A549 (cell line): ENCODE measurements at regions of chr14 and their contacts with region 1.

Region 1: DNA sequence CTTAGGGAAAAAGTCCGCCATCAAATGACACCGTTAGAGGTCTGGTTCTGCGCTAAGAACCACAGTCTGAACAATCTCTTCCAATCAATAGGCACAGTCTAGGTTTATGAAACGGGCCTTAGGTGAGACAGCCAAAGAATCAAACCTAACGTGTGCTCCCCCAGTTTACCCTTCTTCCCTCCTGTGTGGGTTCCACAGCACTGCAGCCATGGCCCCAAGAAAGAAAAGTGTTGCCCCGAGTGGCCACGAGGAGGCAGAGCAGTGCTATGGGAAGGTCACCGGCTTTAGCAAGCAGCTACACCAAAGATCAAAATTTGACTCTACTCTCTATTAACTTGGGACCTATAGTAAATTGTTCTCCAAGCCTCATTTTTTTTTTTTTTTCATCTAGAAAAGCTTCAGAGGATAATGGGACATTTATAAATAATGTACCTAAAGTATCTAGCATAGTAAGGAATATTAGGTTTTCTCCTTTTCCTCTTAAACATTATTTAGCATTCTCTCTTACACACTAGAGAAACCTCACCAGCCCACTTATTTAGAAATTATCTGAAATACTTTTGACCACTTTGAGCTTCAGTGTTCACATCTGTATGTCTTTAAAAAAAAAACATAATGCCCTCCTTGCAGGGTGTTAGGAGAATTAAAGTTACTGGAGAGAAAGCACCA is 70.2 kb upstream of the GPHB5 start:
- DNase-seq: peak; percentile 20 to 65
- ATAC-seq: peak; percentile 94 to 98
- H3K4me3 ChIP-seq: no peak overlapping the region
- H3K27ac ChIP-seq: no peak overlapping the region
- H3K4me1 ChIP-seq: no peaks in the 10 kb centered on the region
- CTCF ChIP-seq: peak; percentile 86
- EP300 ChIP-seq: no peak
- POLR2A ChIP-seq: no peak
- RAD21 ChIP-seq: peak; percentile 91 to 92

Region 2: DNA sequence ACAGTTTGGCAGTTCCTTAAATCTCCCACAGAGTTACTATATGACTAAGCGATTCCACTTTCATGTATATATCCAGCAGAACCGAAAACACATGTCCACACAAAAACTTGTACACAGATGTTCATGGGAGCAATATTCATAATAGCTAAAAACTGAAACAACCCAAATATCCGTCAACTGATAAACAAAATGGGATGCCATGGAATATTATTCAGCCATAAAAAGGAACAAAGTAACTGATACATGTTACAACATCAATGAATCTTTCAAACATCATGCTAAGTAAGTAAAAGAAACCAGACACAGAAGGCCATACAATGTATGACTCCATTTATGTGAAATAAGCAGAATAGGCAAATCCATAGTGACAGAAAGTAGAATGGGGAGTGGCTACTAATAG is 10.1 kb after region 1 on chr14:
- CTCF ChIA-PET with region 1: interaction called, 19 read pairs
- POLR2A ChIA-PET with region 1: no interaction called
- DNase-seq: no peak
- ATAC-seq: no peak
- H3K4me3 ChIP-seq: no peak overlapping the region
- H3K27ac ChIP-seq: no peak overlapping the region
- H3K4me1 ChIP-seq: peaks cover 11% of the 10 kb centered on the region; the same call in 1 of the 3 replicates
- CTCF ChIP-seq: no peak
- EP300 ChIP-seq: no peak
- POLR2A ChIP-seq: no peak
- RAD21 ChIP-seq: no peak

Region 3: DNA sequence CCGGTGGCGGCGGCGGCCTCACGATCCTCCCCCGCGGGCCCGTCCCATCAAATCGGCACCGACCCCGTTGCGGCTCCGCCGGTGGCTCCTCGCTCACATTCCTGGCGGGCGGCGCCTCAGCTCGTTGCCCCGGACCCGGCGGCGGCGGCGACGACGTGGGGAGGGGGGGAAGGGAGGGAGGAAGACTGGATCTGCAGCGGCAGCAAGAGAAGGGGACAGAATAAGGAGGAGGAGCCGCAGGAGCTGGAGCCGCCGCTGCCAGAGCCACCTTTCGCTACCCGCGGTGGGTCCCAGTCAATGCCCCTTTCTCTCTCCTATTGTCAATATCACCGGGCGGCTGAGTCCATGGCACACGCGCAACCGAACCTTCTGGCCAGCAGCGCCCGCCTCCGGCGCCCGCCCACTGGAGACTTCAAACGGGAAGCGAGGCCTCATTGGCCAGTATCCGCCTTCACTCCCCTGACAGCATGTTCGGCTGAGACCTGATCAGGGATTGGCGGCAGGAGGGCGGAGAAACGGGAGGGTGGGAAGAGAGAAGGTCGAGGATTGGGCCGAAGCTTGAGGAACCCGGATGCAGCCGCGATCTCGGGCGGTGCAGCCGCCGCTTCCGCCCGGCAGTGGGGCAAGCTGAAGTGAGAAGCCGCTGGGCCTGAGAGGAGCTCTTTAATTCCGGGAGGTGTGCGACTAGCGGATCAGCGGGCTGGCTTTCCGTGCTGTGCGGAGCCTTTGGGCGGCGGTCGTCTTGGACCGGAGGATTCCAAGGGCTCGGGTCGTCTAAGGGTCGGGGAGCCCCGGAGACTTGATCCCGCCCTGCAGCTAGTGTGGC is 154.3 kb after region 1 on chr14 and contains the start of gene PPP2R5E:
- CTCF ChIA-PET with region 1: interaction called, 38 read pairs
- POLR2A ChIA-PET with region 1: interaction called, 7 read pairs
- DNase-seq: peak; percentile 96 to 99
- ATAC-seq: peak; percentile 97 to 98
- H3K4me3 ChIP-seq: peak within 1 kb of the TSS; percentile 71
- H3K27ac ChIP-seq: peak within 1 kb of the TSS; percentile 92 to 97
- H3K4me1 ChIP-seq: peaks cover 10% of the 10 kb centered on the region; the same call in 2 of the 3 replicates
- CTCF ChIP-seq: no peak
- EP300 ChIP-seq: no peak
- POLR2A ChIP-seq: peak; percentile 86
- RAD21 ChIP-seq: no peak
- polyA plus RNA-seq, gene PPP2R5E: 23.2 and 25.0 TPM in 2 replicates

Region 4: DNA sequence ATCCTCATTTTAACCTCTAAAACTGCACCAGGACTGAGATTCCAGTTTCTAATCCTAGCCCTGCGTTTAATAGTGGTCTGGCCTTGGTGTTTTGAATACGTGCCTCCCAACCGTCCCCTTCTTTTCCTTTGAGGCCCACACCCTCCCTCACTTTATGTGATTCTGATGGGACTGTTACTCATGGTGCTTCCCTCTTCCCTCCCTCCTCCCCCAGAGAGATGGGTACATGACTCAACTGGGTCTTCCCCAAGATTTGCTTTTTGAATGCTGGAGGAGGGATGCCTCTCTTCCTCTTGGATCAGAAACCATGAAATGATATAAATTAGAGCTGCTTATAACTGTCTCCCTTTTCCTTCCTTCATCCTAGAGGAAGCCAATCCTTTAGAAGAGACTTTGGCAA is 162.4 kb after region 1 on chr14:
- CTCF ChIA-PET with region 1: interaction called, 15 read pairs
- POLR2A ChIA-PET with region 1: no interaction called
- DNase-seq: no peak
- ATAC-seq: peak; percentile 24 to 51; a peak in 1 of 6 replicates
- H3K4me3 ChIP-seq: no peak overlapping the region
- H3K27ac ChIP-seq: no peak overlapping the region
- H3K4me1 ChIP-seq: peaks cover 3% of the 10 kb centered on the region; the same call in 1 of the 3 replicates
- CTCF ChIP-seq: no peak
- EP300 ChIP-seq: no peak
- POLR2A ChIP-seq: no peak
- RAD21 ChIP-seq: no peak

Region 5: DNA sequence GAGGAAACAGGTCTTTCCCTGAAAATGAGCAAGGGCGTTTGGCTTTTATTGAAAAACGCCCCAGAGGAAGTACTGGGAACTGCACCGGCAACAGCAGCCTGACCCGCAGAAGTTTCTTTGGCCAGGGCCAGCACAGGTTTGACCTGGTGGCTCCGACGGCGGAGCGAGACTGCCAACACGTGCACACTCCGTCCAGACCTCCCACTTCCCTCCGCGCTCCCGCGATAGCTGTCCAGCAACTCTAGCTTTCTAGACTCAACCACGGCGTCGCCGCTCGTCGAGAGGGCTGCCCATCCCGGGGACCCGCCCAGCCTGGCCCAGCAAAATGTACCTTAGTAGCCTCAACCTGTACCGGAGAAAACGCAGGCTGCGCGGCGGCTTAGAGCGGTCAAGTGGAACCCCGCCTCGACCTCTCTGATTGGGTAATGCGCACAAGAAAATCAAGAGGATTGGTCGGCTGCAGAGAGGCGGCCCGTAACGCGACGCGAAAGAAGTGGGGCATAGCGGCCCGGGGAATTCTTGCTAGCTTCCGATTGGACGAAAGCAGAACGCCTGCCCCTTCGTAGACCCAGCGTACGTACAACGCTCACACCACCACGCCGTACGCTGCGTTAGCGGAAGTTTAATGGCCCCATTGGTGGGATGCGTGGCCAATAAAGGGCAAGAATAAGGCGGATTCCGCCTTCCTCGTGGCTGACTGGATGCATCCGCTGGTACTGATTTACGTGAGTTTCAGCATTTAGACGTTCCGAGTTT is 252.8 kb after region 1 on chr14 and contains the start of gene WDR89:
- CTCF ChIA-PET with region 1: interaction called, 18 read pairs
- POLR2A ChIA-PET with region 1: interaction called, 5 read pairs
- DNase-seq: peak; percentile 98 to 100
- ATAC-seq: peak; percentile 96
- H3K4me3 ChIP-seq: peak within 1 kb of the TSS; percentile 55
- H3K27ac ChIP-seq: peak within 1 kb of the TSS; percentile 85 to 90
- H3K4me1 ChIP-seq: peaks cover 15% of the 10 kb centered on the region; the same call in 2 of the 3 replicates
- CTCF ChIP-seq: peak; percentile 50; the same call in 2 of the 3 replicates
- EP300 ChIP-seq: no peak
- POLR2A ChIP-seq: peak; percentile 85
- RAD21 ChIP-seq: peak; percentile 38 to 50; a peak in 4 of 5 replicates
- polyA plus RNA-seq, gene WDR89: 15.7 and 20.9 TPM in 2 replicates